ENCODE measurements at regions of chr14 and their contacts with region 1.

Region 1: GRCh38 chr14:95662376-95663186 is 23.6 kb upstream of the TCL1B start:
- DNase-seq: no peak
- H3K27ac ChIP-seq: no peak overlapping the region
- CTCF ChIP-seq: no peak

Region 2: DNA sequence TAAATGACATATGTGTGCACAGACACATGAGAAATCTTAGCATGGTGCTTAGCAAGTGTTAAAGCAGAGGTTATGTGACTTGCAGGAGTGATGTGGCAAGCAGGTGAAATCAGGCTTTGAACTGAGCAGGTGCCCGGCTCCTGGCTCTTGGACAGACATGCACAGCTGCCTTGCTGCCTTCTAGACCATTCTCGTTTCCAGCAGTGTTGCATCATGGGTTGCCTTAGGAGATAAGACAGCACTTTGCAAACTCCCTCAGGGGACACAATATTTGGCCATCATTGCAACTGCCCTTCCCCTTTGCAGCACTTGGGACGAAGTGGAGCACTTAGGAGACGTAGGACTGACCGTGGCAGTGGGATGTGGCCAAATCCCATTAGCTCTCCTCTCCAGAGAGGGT is 875.5 kb before region 1 on chr14:
- CTCF ChIA-PET with region 1: no interaction called
- POLR2A ChIA-PET with region 1: interaction called, 12 read pairs
- DNase-seq: no peak
- H3K27ac ChIP-seq: no peak overlapping the region
- CTCF ChIP-seq: no peak

Region 3: GRCh38 chr14:95564060-95564459 is 98.5 kb before region 1 on chr14:
- CTCF ChIA-PET with region 1: no interaction called
- POLR2A ChIA-PET with region 1: no interaction called
- DNase-seq: no peak
- H3K27ac ChIP-seq: 0 out of 2 replicates have a peak overlapping the region, but pooled peaks have one; percentile 7
- CTCF ChIP-seq: no peak

Measured in RWPE1 (cell line).